ENCODE measurements at regions of chr1 and their contacts with region 1.

Region 1: GRCh38 chr1:210311726-210312493 is 16.8 kb upstream of the HHAT start:
- DNase-seq: no peak
- ATAC-seq: no peak
- H3K4me3 ChIP-seq: peak overlapping the region; percentile 42
- H3K4me3 Mint-ChIP-seq: peak overlapping the region in 9 of 10 donors; percentile 66 to 94 (median 88)
- H3K27ac ChIP-seq: no peak overlapping the region
- H3K27ac Mint-ChIP-seq: peak overlapping the region in 3 of 9 donors; percentile 9 to 43 (median 33)
- H3K4me1 ChIP-seq: no peaks in the 10 kb centered on the region
- H3K4me1 Mint-ChIP-seq: peaks cover 2 to 7% (median 5%) of the 10 kb centered on the region in 7 donors
- H3K27me3 ChIP-seq: no peaks in the 10 kb centered on the region
- H3K27me3 Mint-ChIP-seq: peaks cover 10 to 56% (median 20%) of the 10 kb centered on the region in 5 donors

Region 2: GRCh38 chr1:209860293-209860881 is 451.5 kb before region 1 on chr1:
- CTCF ChIA-PET with region 1: interaction called, 9 read pairs
- POLR2A ChIA-PET with region 1: no interaction called
- intact Hi-C with region 1: loop called (anchors 1 kb)
- DNase-seq: peak; percentile 32 to 68 (median 58)
- ATAC-seq: peak; percentile 88
- H3K4me3 ChIP-seq: no peak overlapping the region
- H3K4me3 Mint-ChIP-seq: no peak overlapping the region
- H3K27ac ChIP-seq: no peak overlapping the region
- H3K27ac Mint-ChIP-seq: no peak overlapping the region
- H3K4me1 ChIP-seq: no peaks in the 10 kb centered on the region
- H3K4me1 Mint-ChIP-seq: peaks cover 0 to 5% (median 0%) of the 10 kb centered on the region in 7 donors
- H3K27me3 ChIP-seq: no peaks in the 10 kb centered on the region
- H3K27me3 Mint-ChIP-seq: peaks cover 0 to 25% (median 15%) of the 10 kb centered on the region in 5 donors

Region 3: GRCh38 chr1:210143465-210144062 is 168.3 kb before region 1 on chr1:
- CTCF ChIA-PET with region 1: no interaction called
- POLR2A ChIA-PET with region 1: no interaction called
- intact Hi-C with region 1: loop called in 1 of 2 experiments (anchors 1 kb)
- DNase-seq: peak in 2 of 9 donors; percentile 2 to 38
- ATAC-seq: no peak
- H3K4me3 ChIP-seq: no peak overlapping the region
- H3K4me3 Mint-ChIP-seq: no peak overlapping the region
- H3K27ac ChIP-seq: no peak overlapping the region
- H3K27ac Mint-ChIP-seq: no peak overlapping the region
- H3K4me1 ChIP-seq: no peaks in the 10 kb centered on the region
- H3K4me1 Mint-ChIP-seq: no peaks in the 10 kb centered on the region
- H3K27me3 ChIP-seq: no peaks in the 10 kb centered on the region
- H3K27me3 Mint-ChIP-seq: peaks cover 4 to 32% (median 21%) of the 10 kb centered on the region in 5 donors

Region 4: GRCh38 chr1:210328746-210329503 is 17.0 kb after region 1 on chr1 and contains the start of gene HHAT:
- CTCF ChIA-PET with region 1: no interaction called
- POLR2A ChIA-PET with region 1: no interaction called
- intact Hi-C with region 1: loop called (anchors 1 to 2 kb)
- DNase-seq: peak; percentile 25 to 74 (median 38)
- ATAC-seq: peak; percentile 67
- H3K4me3 ChIP-seq: peak within 1 kb of the TSS; percentile 66
- H3K4me3 Mint-ChIP-seq: peak within 1 kb of the TSS; percentile 85 to 98 (median 94)
- H3K27ac ChIP-seq: peak within 1 kb of the TSS; percentile 61
- H3K27ac Mint-ChIP-seq: peak within 1 kb of the TSS; percentile 74 to 95 (median 89)
- H3K4me1 ChIP-seq: peaks cover 8 to 33% of the 10 kb centered on the region in 2 donors
- H3K4me1 Mint-ChIP-seq: peaks cover 13 to 31% (median 21%) of the 10 kb centered on the region in 7 donors
- H3K27me3 ChIP-seq: no peaks in the 10 kb centered on the region
- H3K27me3 Mint-ChIP-seq: peaks cover under 1 to 35% (median 10%) of the 10 kb centered on the region in 5 donors
- total RNA-seq, gene HHAT: 1.1 to 3.8 (median 2.7) TPM

Measured in naive thymus-derived CD4-positive, alpha-beta T cell (primary cell).